Calu3 (cell line): ENCODE measurements at regions of chr1 and their contacts with region 1.

Region 1: GRCh38 chr1:156060937-156061636 is at the start of gene RAB25:
- DNase-seq: peak; percentile 95
- H3K4me3 Mint-ChIP-seq: peak within 1 kb of the TSS; percentile 96
- H3K27ac Mint-ChIP-seq: peak within 1 kb of the TSS; percentile 98
- H3K4me1 Mint-ChIP-seq: peaks cover 47% of the 10 kb centered on the region
- H3K27me3 Mint-ChIP-seq: no peaks in the 10 kb centered on the region
- CTCF ChIP-seq: no peak
- total RNA-seq, gene RAB25: 182 and 189 TPM in 2 replicates

Region 2: DNA sequence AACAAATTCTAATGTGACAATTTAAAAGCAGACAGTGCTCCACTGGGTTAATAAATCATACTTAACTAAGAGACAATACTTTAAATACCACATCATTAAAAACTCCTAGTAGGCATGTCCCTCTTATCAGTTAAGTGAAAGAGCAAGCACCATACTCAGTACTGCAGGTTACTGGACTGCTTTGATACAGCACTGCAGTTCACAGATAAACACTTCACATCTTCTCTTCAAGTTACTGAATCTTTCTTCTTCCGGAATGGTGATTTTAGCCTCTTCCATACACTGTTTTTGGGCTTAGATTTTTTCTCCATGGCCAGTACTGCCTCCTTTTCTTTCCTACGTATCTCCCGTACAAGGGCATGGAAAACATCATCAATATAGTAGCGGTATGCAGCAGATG is 160.9 kb before region 1 on chr1:
- CTCF ChIA-PET with region 1: no interaction called
- intact Hi-C with region 1: no loop called
- DNase-seq: no peak
- H3K4me3 Mint-ChIP-seq: no peak overlapping the region
- H3K27ac Mint-ChIP-seq: no peak overlapping the region
- H3K4me1 Mint-ChIP-seq: no peaks in the 10 kb centered on the region
- H3K27me3 Mint-ChIP-seq: no peaks in the 10 kb centered on the region
- CTCF ChIP-seq: no peak

Region 3: GRCh38 chr1:155938220-155938627 is 122.9 kb before region 1 on chr1:
- CTCF ChIA-PET with region 1: interaction called, 10 read pairs
- intact Hi-C with region 1: loop called (anchors 5 kb)
- DNase-seq: peak; percentile 58
- H3K4me3 Mint-ChIP-seq: no peak overlapping the region
- H3K27ac Mint-ChIP-seq: peak overlapping the region; percentile 69
- H3K4me1 Mint-ChIP-seq: peaks cover 35% of the 10 kb centered on the region
- H3K27me3 Mint-ChIP-seq: no peaks in the 10 kb centered on the region
- CTCF ChIP-seq: peak; percentile 24

Region 4: GRCh38 chr1:156020292-156021089 is 40.6 kb before region 1 on chr1 and contains the start of gene SSR2:
- CTCF ChIA-PET with region 1: interaction called, 10 read pairs
- intact Hi-C with region 1: loop called (anchors 5 kb)
- DNase-seq: peak; percentile 89
- H3K4me3 Mint-ChIP-seq: peak within 1 kb of the TSS; percentile 95
- H3K27ac Mint-ChIP-seq: peak within 1 kb of the TSS; percentile 50
- H3K4me1 Mint-ChIP-seq: peaks cover 16% of the 10 kb centered on the region
- H3K27me3 Mint-ChIP-seq: peaks cover 37% of the 10 kb centered on the region
- CTCF ChIP-seq: no peak
- total RNA-seq, gene SSR2: 215 and 246 TPM in 2 replicates

Region 5: GRCh38 chr1:156025877-156026276 is 35.2 kb before region 1 on chr1:
- CTCF ChIA-PET with region 1: interaction called, 10 read pairs
- intact Hi-C with region 1: loop called (anchors 5 kb)
- DNase-seq: peak; percentile 71
- H3K4me3 Mint-ChIP-seq: no peak overlapping the region
- H3K27ac Mint-ChIP-seq: no peak overlapping the region
- H3K4me1 Mint-ChIP-seq: peaks cover 7% of the 10 kb centered on the region
- H3K27me3 Mint-ChIP-seq: peaks cover 41% of the 10 kb centered on the region
- CTCF ChIP-seq: peak; percentile 40

Region 6: DNA sequence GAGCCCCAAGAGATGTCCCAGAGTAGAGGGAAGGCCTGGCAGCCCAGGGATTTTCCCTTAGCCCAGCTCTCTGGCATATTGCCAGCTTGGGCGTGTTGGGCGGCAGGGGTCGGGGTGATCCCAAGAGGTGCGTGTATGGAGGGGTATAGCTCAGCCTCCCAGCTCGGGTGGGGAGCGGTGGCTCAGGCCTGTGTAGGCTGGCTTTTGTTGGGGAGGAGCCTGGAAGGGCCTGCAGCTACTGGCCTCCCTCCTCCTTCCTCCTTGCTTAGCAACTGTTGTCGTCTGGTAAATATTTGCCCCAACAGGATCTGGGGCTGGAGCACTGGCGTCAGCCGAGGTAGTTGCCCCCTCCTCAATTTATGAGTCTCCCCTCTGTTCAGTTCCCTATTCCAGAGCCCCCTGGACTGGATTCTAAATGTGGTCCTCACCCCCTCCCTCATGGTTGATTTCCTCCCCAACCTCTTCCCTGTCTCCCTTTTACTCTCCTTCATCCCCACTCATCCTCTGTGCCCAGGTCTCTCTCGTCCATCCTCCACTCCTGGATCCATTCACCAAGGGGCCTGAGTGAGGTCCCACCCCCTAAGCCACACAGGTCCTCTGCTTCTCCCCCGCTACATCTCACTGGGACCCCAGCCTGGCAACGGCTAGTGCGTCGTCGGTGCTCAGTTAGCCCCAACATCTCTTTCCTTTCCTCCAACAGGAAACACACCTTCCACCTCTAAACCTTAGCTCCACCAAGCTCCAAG is 43.2 kb after region 1 on chr1:
- CTCF ChIA-PET with region 1: no interaction called
- intact Hi-C with region 1: no loop called
- DNase-seq: peak; percentile 88
- H3K4me3 Mint-ChIP-seq: peak overlapping the region; percentile 64
- H3K27ac Mint-ChIP-seq: peak overlapping the region; percentile 89
- H3K4me1 Mint-ChIP-seq: peaks cover 84% of the 10 kb centered on the region
- H3K27me3 Mint-ChIP-seq: no peaks in the 10 kb centered on the region
- CTCF ChIP-seq: no peak